IMR-90 (cell line): ENCODE measurements at regions of chr11 and their contacts with region 1.

Region 1: DNA sequence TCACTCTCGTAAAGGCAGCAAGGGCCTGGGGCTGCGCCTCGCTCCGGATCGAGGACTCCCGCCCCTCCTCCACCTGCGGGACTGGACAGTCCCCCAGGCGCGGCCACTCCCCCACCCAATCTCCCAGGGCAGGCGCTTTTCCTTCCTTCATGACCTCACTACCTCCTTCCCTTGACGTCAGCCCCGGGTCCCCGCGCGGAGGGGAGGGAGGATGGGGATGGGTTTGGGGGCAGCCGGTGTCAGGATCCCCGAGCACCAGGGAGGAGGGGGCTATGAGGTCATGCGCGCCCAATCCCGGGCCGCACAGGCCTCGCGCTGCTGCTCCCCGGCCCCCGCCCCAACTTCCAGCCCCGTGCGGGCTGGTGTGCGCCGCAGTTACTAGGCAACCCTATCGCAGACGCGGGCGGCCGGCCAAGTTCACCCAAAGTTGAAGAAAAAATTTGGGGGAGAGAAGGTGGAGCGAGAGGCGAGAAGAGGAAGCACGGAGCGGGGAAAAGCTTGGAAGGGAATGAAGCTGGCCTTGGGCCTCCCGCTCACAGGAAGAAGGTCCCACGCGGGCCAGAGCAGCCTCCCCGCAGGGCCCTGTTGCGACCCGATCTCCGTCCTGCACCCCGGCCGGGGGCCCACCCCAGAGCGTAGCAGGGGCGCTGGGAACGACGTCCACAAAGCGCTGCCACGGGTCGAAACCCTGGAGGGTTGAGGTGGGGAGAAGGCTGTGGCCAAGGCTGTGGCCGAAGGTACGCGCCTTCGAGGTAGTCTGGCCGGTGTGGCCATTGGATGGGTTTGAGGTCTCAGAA is 8.3 kb downstream of the WT1 start:
- DNase-seq: no peak
- ATAC-seq: no peak
- H3K4me3 ChIP-seq: no peak overlapping the region
- H3K27ac ChIP-seq: no peak overlapping the region
- H3K4me1 ChIP-seq: no peaks in the 10 kb centered on the region
- H3K27me3 ChIP-seq: peaks cover 67% of the 10 kb centered on the region
- CTCF ChIP-seq: no peak
- POLR2A ChIP-seq: no peak
- RAD21 ChIP-seq: no peak

Region 2: GRCh38 chr11:32478277-32478731 is 51.3 kb after region 1 on chr11:
- CTCF ChIA-PET with region 1: no interaction called
- POLR2A ChIA-PET with region 1: no interaction called
- dilution Hi-C with region 1: no loop called
- in situ Hi-C with region 1: loop called (anchors 5 kb)
- intact Hi-C with region 1: no loop called
- DNase-seq: no peak
- ATAC-seq: no peak
- H3K4me3 ChIP-seq: no peak overlapping the region
- H3K27ac ChIP-seq: no peak overlapping the region
- H3K4me1 ChIP-seq: no peaks in the 10 kb centered on the region
- H3K27me3 ChIP-seq: peaks cover 2% of the 10 kb centered on the region; the same call in 1 of the 2 replicates
- CTCF ChIP-seq: no peak
- POLR2A ChIP-seq: no peak
- RAD21 ChIP-seq: no peak